Psoas muscle (tissue), 8 donors: ENCODE measurements at regions of chr18 and their contacts with region 1.

Region 1: DNA sequence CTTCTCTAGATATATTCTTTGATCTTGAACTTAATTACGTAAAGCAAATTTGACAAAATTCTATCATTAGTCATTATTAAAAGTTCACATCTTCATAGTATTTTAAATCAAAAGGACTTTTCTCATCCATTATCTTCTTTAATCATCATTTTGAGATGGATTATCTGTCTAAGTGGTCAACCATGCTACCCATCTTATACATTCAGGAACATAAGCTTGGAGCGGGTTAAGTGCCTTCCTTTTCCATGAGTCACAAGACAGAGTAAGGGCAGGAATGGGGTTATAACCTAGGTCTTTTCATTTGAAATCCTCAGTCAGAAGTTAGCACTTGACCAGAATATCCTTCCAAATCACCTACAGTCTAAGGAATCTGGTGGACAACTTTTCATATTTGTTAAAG is 297.1 kb downstream of the TCF4 start:
- DNase-seq: no peak
- ATAC-seq: no peak
- H3K4me3 ChIP-seq: no peak overlapping the region
- H3K27ac ChIP-seq: no peak overlapping the region
- H3K4me1 ChIP-seq: peaks cover 62% of the 10 kb centered on the region
- H3K27me3 ChIP-seq: no peaks in the 10 kb centered on the region
- CTCF ChIP-seq: no peak

Region 2: GRCh38 chr18:55316486-55317184 is 25.7 kb after region 1 on chr18:
- intact Hi-C with region 1: loop called in 1 of 2 experiments (anchors 1 kb)
- DNase-seq: no peak
- ATAC-seq: no peak
- H3K4me3 ChIP-seq: peak overlapping the region; percentile 77
- H3K27ac ChIP-seq: peak overlapping the region; percentile 89
- H3K4me1 ChIP-seq: peaks cover 68% of the 10 kb centered on the region
- H3K27me3 ChIP-seq: no peaks in the 10 kb centered on the region
- CTCF ChIP-seq: no peak